IMR-90 (cell line): ENCODE measurements at regions of chr5 and their contacts with region 1.

Region 1: GRCh38 chr5:114449860-114450421 is 88.1 kb downstream of the KCNN2 start:
- DNase-seq: peak; percentile 72
- ATAC-seq: peak; percentile 98
- H3K4me3 ChIP-seq: no peak overlapping the region
- H3K27ac ChIP-seq: no peak overlapping the region
- H3K4me1 ChIP-seq: no peaks in the 10 kb centered on the region
- H3K27me3 ChIP-seq: peaks cover 2% of the 10 kb centered on the region
- CTCF ChIP-seq: peak; percentile 84
- POLR2A ChIP-seq: no peak
- RAD21 ChIP-seq: peak; percentile 93

Region 2: GRCh38 chr5:113612060-113612496 is 837.9 kb before region 1 on chr5:
- CTCF ChIA-PET with region 1: interaction called, 4 read pairs
- POLR2A ChIA-PET with region 1: no interaction called
- dilution Hi-C with region 1: no loop called
- in situ Hi-C with region 1: loop called (anchors 5 kb)
- intact Hi-C with region 1: loop called (anchors 1 kb)
- DNase-seq: peak; percentile 51
- ATAC-seq: peak; percentile 61
- H3K4me3 ChIP-seq: no peak overlapping the region
- H3K27ac ChIP-seq: no peak overlapping the region
- H3K4me1 ChIP-seq: peaks cover 9% of the 10 kb centered on the region
- H3K27me3 ChIP-seq: no peaks in the 10 kb centered on the region
- CTCF ChIP-seq: peak; percentile 67
- POLR2A ChIP-seq: no peak
- RAD21 ChIP-seq: peak; percentile 69

Region 3: DNA sequence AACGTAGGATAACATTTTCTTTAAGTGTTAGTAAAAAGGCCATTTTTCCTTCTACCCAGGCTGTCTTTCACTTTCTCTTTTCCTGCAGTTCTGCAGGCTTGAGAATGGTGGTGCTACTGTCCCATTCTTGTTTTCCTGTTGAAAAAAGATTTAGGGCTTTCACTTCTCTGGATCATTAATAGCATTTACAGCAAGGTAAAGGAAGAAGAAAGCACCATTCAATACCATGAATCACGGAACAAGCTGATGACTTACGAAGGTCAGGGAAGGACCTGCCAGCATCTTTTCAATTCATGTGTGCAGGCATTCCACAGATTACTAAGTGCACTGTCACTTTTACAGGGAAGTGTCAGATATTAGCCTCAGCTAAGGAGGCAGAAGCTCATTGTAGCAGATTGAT is 643.7 kb before region 1 on chr5:
- CTCF ChIA-PET with region 1: interaction called, 3 read pairs
- POLR2A ChIA-PET with region 1: no interaction called
- dilution Hi-C with region 1: no loop called
- in situ Hi-C with region 1: no loop called
- intact Hi-C with region 1: loop called (anchors 1 kb)
- DNase-seq: peak; percentile 34
- ATAC-seq: peak; percentile 68
- H3K4me3 ChIP-seq: peak overlapping the region; percentile 22; the same call in 1 of the 2 replicates
- H3K27ac ChIP-seq: no peak overlapping the region
- H3K4me1 ChIP-seq: no peaks in the 10 kb centered on the region; the same call in 1 of the 2 replicates
- H3K27me3 ChIP-seq: no peaks in the 10 kb centered on the region
- CTCF ChIP-seq: peak; percentile 54
- POLR2A ChIP-seq: no peak
- RAD21 ChIP-seq: peak; percentile 44

Region 4: DNA sequence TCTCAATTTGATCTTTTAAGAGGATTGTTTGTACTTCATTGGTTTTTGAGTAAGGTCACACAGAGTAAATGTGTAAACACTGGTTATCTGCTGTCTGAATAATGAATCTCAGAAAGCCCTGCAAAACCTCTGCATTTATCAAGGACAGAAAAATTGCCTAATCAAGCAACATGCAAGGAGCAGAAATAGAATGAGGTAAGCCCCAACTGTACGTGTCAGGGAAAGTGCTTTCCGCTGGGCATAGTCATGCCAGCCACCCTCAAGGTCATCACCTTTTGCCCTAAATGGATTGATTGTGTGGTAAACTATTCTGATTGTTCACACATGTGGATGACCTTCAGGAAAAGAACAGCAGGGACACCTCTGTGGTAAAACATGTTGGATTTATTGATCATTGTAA is 465.0 kb before region 1 on chr5:
- CTCF ChIA-PET with region 1: no interaction called
- POLR2A ChIA-PET with region 1: no interaction called
- dilution Hi-C with region 1: no loop called
- in situ Hi-C with region 1: no loop called
- intact Hi-C with region 1: no loop called
- DNase-seq: no peak
- ATAC-seq: no peak
- H3K4me3 ChIP-seq: no peak overlapping the region
- H3K27ac ChIP-seq: no peak overlapping the region
- H3K4me1 ChIP-seq: no peaks in the 10 kb centered on the region
- H3K27me3 ChIP-seq: no peaks in the 10 kb centered on the region
- CTCF ChIP-seq: no peak
- POLR2A ChIP-seq: no peak
- RAD21 ChIP-seq: no peak

Region 5: GRCh38 chr5:114062932-114063874 is 386.7 kb before region 1 on chr5:
- CTCF ChIA-PET with region 1: no interaction called
- POLR2A ChIA-PET with region 1: no interaction called
- dilution Hi-C with region 1: no loop called
- in situ Hi-C with region 1: no loop called
- intact Hi-C with region 1: loop called (anchors 1 kb)
- DNase-seq: peak; percentile 10
- ATAC-seq: peak; percentile 42; the same call in 1 of the 2 replicates
- H3K4me3 ChIP-seq: no peak overlapping the region
- H3K27ac ChIP-seq: no peak overlapping the region
- H3K4me1 ChIP-seq: no peaks in the 10 kb centered on the region
- H3K27me3 ChIP-seq: peaks cover 11% of the 10 kb centered on the region
- CTCF ChIP-seq: peak; percentile 32
- POLR2A ChIP-seq: no peak
- RAD21 ChIP-seq: peak; percentile 37

Region 6: DNA sequence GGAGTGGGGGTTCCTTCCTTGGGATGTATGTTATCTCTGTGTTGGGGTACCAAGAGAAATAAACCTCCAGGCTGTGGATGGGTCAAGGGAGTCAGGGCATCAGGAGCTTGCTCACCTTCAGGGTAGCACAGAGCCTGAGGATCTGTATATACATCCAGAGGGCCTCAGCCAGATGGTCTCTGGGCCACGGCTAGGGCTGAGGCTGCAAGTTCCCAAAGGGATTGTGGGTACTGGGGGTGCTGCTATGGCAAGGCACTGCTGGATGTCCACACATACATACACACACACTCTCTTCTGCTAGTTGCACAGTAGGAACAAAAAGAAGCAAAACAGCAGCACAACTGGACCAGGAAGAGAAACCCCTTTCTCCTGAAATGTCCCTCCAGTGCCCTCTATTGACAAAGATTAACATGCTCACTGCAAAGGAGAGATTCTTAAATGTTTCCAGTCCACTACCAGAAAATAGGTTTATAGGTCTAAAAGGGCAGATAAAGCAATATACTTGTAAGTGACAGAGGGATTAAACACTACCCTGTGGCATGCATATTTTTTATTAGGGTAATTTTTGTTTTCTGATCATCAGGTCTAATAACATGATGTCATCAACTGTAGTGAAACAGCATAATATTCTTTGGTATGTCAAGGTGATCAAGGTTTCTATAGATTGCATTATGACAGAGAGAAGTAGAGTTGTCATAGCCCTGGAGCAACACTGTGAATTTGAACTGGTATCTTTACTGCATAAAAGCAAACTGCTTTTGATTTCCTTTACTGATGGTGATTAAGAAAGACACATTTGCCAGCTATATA is 144.3 kb before region 1 on chr5:
- CTCF ChIA-PET with region 1: interaction called, 4 read pairs
- POLR2A ChIA-PET with region 1: no interaction called
- dilution Hi-C with region 1: no loop called
- in situ Hi-C with region 1: no loop called
- intact Hi-C with region 1: loop called (anchors 5 kb)
- DNase-seq: peak; percentile 74
- ATAC-seq: peak; percentile 90
- H3K4me3 ChIP-seq: no peak overlapping the region
- H3K27ac ChIP-seq: peak overlapping the region; percentile 81
- H3K4me1 ChIP-seq: peaks cover 10% of the 10 kb centered on the region
- H3K27me3 ChIP-seq: no peaks in the 10 kb centered on the region
- CTCF ChIP-seq: peak; percentile 85
- POLR2A ChIP-seq: no peak
- RAD21 ChIP-seq: peak; percentile 84

Region 7: GRCh38 chr5:114544561-114544960 is 94.6 kb after region 1 on chr5:
- CTCF ChIA-PET with region 1: no interaction called
- POLR2A ChIA-PET with region 1: no interaction called
- dilution Hi-C with region 1: no loop called
- in situ Hi-C with region 1: no loop called
- intact Hi-C with region 1: no loop called
- DNase-seq: no peak
- ATAC-seq: no peak
- H3K4me3 ChIP-seq: no peak overlapping the region
- H3K27ac ChIP-seq: no peak overlapping the region
- H3K4me1 ChIP-seq: no peaks in the 10 kb centered on the region
- H3K27me3 ChIP-seq: no peaks in the 10 kb centered on the region
- CTCF ChIP-seq: no peak
- POLR2A ChIP-seq: no peak
- RAD21 ChIP-seq: no peak

Region 8: GRCh38 chr5:115069087-115069968 is 619.4 kb after region 1 on chr5:
- CTCF ChIA-PET with region 1: no interaction called
- POLR2A ChIA-PET with region 1: no interaction called
- dilution Hi-C with region 1: no loop called
- in situ Hi-C with region 1: no loop called
- intact Hi-C with region 1: loop called (anchors 2 kb)
- DNase-seq: peak; percentile 58
- ATAC-seq: peak; percentile 90
- H3K4me3 ChIP-seq: no peak overlapping the region
- H3K27ac ChIP-seq: no peak overlapping the region
- H3K4me1 ChIP-seq: no peaks in the 10 kb centered on the region
- H3K27me3 ChIP-seq: no peaks in the 10 kb centered on the region
- CTCF ChIP-seq: peak; percentile 62
- POLR2A ChIP-seq: no peak
- RAD21 ChIP-seq: peak; percentile 70